ENCODE measurements at regions of chr5 and their contacts with region 1.

Region 1: DNA sequence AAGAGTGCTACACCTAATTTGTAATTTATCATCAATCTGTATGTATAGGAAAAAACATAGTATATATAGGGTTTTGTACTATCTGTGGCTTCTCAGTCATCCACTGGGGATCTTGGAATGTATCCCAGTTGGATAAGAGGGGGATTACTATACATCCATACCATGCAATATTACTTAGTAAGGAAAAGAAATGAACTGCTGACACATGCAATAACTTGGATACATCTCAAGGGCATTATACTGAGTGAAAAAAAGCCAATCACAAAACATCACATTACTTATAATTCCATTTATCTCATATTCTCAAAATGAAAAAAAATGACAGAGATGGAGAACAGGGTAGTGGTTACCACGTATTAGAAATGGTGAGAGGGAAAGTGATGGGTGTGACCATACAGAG is 108.3 kb upstream of the RGS7BP start:
- ATAC-seq: no peak
- H3K4me3 ChIP-seq: no peak overlapping the region
- H3K27ac ChIP-seq: no peak overlapping the region
- H3K4me1 ChIP-seq: no peaks in the 10 kb centered on the region

Region 2: DNA sequence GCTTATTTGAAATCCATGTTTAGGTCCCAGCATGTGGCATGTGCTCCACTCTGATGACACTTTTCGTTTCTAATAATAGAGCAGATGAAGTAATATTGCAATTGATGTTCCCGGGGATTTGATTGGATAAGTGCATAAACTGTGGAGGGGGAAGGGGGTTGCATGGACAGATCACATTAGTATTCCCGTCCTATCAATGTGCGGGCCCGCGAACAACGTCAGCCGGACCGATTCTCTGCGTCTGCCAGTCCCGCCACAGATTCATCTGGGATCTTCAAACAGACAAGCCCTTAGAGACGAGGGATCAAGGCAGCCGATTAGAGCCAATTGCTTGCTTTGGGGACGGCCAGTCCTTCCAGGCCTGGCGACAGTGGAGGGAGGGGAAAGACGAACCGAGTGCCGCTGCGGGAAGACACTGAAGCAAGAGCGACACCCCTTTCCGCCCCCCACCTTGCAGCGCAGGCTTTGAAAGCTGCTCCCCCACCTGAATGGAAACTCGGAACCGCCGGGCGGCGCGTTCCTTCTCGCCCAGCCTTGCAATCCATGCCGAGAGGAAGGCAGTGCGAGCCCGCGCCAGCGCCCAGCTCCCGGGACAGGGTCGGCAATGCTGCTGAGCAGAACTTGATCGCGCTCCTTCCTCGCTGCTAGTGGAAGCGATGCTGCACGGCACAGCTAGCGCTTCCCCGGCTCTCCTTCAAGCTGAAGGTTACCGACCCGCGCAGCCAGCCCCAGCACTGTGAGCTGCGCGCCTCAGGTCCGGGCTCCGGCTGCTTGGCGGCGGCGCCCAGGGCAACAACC is 108.4 kb after region 1 on chr5 and contains the start of gene RGS7BP:
- in situ Hi-C with region 1: no loop called
- ATAC-seq: peak; percentile 84 to 93 (median 88)
- H3K4me3 ChIP-seq: peak within 1 kb of the TSS; percentile 63 to 83 (median 73)
- H3K27ac ChIP-seq: peak within 1 kb of the TSS; percentile 60 to 88
- H3K4me1 ChIP-seq: peaks cover 18 to 24% of the 10 kb centered on the region in 2 donors
- total RNA-seq, gene RGS7BP: 0.10 to 9.5 (median 3.8) TPM

Region 3: DNA sequence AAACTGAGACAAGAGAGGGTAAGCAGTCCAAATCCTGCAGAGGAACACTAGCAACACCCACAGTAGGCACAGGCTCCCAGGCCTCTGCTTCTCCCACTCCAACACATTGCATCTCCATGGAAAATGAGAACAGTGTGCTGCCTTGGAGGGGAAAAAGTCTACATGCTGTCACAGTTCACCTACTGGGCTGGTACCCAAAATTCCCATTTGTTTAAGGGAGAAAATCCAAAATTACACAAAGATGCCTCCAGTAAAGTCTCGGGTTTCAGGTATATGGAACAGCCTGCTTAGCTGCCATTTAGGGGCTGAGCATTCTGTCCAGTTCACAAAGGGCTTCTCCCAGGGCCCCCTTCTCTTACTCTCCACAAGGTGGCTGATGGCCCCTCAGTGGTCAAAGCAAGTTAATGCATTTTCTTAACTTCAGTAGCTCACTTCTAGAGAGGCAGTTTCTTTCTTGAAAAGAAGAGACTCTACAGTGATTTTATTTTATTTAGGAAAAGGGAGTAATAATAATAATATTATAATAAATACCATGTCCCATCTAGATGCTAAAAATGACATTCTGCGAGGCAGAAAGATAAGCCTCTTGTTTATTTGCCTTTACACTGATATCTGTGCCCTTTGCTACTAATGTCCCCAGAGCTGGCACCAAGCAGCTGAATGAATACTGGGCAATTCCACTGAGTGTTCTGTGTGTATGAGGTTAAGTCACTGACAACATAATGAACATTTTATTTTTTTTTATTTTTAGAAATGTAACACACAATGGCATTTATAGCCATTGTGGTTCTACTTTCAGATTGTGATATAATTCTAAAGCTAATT is 197.7 kb after region 1 on chr5:
- in situ Hi-C with region 1: loop called in 1 of 9 experiments (anchors 10 kb)
- ATAC-seq: peak in 2 of 8 experiments; percentile 33 to 58
- H3K4me3 ChIP-seq: no peak overlapping the region
- H3K27ac ChIP-seq: no peak overlapping the region
- H3K4me1 ChIP-seq: no peaks in the 10 kb centered on the region

Region 4: GRCh38 chr5:64827703-64828102 is 430.2 kb after region 1 on chr5:
- in situ Hi-C with region 1: no loop called
- ATAC-seq: no peak
- H3K4me3 ChIP-seq: no peak overlapping the region
- H3K27ac ChIP-seq: no peak overlapping the region
- H3K4me1 ChIP-seq: no peaks in the 10 kb centered on the region

Measured in motor neuron (in vitro differentiated cells).